Cardiac septum (tissue), 1 donor: ENCODE measurements at regions of chr19 and their contacts with region 1.

Region 1: GRCh38 chr19:41310033-41310758 is at the start of gene CCDC97:
- DNase-seq: peak; percentile 96
- total RNA-seq, gene CCDC97: 17.0 TPM

Region 2: DNA sequence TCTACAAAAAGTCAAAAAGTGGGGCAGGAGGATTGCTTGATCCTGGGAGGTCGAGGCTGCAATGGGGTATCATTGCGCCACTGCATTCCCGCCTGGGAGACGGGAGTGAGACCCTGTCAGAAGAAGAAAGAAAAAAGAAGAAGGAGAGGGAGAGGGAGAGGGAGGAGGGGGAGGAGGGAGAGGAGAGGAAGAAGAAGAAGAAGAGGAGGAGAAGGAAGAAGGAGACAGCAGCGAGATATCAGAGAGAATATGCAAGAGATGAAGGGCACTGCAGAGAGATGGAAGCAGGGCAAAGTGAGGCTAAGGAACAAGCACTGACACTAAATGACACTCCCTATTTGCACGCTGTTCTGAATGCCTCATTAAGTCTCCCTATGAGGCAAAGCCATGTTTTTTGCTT is 181.5 kb before region 1 on chr19:
- intact Hi-C with region 1: loop called (anchors 5 kb)
- DNase-seq: no peak

Region 3: DNA sequence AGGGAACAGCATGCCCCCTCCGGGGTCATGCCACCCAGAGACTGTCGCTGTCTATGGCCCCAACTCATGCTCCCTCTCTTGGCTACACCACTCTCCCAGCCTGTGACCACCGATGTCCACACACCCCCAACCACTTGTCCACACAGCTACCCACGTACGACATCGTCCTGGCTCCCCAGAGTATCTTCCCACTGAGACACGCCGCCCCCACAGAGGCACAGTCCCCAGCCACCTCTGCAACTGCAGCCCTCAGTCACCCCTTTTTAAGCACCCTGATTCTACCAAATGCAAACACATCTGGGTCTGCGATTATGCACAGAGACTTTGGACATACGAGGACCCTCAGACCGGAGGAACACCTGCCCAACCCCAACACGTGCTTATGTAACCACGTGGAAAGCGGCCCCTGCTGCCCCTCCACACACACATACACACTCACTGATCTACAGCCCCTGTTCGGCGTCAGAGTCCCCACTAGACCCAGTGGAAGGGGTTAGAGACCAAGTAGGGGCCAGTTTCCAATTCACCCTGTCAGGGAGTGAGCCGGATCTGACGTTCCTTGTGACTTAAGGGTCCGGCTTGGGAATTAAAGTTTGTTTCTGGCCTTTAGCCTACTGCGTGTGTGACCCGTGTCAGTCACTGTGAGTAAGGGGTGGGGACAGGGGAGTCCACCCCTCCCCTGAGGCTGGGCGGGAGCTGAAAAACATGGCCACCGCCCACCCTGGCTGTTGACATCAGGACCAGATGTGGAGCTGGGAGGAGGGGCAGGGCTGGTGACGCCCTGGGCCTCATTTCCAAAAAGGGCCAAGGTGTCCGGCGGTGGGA is 103.1 kb before region 1 on chr19:
- intact Hi-C with region 1: loop called (anchors 1 kb)
- DNase-seq: no peak

Region 4: DNA sequence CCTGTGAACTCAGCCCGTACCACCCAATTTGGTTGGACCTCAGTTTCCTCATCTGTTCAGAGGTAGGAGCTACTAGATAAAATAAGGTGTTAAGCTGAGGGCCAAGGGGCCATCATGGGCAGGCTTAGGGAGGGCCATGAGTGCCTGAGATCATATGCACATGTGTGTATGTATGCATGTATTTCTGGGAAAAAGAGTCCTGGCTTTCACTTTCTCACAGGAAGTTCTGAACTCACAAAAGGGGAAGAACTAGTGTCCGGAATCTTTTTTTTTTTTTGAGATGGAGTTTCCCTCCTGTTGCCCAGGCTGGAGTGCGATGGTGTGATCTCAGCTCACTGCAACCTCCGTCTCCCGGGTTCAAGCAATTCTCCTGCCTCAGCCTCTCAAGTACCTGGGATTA is 24.6 kb after region 1 on chr19:
- intact Hi-C with region 1: no loop called
- DNase-seq: no peak

Region 5: DNA sequence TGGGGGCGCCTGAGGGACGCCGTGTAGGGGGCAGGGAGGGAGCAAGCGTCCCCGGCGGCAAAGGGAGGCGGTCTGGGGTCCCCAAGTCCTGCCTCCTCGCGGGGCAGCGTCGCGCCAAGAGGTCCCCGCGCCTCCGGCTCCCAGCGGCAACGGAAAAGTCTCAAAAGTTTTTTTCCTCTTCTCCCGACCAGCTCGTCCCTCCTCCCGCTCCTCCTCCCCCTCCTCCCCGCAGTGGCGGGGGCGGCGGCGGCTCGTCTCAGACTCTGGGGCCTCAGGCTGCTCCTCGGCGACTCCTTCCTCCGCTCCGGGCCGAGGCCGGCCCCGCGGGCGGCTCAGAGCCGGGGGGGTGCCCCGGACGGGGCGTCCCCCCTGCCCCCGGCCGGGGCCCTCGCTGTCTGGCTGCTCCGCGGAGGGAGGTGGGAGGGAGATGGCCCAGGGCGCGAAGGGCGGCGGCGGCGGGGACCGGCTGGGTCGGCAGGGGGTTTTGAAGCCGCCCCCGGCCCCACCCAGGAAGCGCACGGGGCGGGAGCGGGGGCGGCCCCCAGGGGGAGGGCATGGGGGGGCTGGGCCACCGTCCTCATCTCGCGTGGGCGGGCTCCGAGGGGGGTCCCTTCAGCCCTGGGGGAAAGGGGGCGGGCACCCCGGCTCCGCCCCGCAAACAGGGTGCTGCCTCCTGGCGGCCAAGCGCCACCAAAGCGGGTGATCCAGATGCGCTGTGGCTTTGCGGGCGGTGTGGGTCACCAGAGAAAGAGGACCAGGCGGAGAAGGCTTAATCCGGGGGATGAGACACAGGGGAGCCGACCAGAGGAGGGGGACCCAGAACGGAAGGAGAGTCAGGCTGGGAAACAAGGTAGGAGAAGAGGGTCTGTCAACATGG is 43.5 kb after region 1 on chr19 and contains the start of gene TGFB1:
- intact Hi-C with region 1: loop called (anchors 5 kb)
- DNase-seq: peak; percentile 97
- total RNA-seq, gene TGFB1: 26.4 TPM

Region 6: DNA sequence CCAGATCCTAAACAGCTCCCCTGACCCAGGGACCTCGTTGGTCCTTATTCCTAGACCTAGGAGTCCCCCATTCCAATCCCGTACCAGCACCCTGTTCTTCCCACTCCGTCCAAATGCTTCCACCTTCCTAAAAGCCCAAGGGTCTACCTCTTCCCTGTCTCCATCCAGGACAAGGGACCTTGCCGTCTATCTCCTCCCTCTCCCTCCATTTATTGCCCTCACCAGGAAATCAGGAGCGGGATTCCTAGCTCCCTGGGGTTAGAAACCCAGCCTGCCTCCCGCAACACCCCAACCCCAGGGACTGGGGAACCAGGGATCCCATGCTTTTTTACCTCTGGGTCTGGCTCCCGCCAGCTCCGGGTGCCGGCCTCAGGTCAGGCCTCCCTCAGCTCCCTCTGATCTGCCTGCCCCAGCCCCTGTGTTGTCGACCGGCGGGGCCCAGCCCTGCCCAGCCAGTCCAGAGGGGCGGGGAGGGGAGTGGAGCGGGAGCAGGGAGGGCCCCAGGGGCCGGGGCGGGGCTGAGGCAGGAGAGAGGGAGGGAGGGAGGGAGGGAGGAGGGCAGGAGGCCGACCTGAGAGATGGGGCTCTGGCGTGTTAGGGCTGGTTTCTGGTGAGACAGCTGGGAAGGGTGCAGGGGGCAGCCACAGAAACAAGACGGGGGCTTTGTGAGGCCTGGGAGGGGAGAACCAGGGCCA is 116.9 kb after region 1 on chr19 and contains the start of gene B3GNT8:
- intact Hi-C with region 1: loop called (anchors 5 kb)
- DNase-seq: peak; percentile 96
- total RNA-seq, gene B3GNT8: 3.9 TPM